Astrocyte of the cerebellum (primary cell): ENCODE measurements at regions of chr6 and their contacts with region 1.

Region 1: GRCh38 chr6:134918418-134918961 is 31.4 kb downstream of the ALDH8A1 start:
- DNase-seq: no peak
- H3K4me3 ChIP-seq: no peak overlapping the region
- CTCF ChIP-seq: no peak

Region 2: DNA sequence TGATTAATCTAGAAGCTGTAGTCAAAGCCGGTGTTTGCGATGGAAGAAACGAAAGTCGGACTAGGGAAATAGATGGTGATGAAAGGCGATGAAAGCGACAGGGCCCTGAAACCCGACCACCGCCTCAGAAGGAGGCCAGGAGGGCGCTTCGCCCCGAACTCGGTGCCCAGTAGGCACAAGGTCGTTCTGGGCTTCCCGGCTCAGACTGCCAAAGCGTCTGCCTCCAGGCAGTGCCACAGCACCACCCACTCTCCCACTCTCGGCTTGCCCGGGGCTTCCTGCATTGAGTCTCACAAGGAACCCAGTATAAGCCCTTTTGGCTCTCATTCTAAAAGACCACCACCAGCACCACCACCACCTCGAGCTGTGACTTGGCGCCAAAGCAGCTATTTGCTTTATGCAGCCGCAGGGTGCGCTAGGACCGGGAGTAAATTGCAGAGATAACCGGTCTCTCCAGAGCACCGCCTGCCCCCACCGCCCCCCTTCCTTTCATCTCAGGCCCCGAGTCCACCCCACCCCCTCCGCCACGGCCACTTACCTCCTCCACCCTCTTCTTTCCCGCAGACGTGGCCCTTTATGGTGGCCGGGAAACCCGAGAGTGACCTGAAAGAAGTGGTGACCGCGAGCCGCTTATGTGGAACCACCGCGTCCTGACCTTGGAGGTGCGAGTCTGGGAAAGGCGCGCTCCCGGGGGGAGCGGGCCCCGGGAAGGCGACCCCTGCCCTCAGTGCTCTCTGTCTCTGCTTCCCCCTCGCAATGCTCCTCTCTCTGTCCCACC is 1027.2 kb before region 1 on chr6:
- in situ Hi-C with region 1: no loop called
- DNase-seq: no peak
- H3K4me3 ChIP-seq: peak overlapping the region; percentile 35
- CTCF ChIP-seq: no peak

Region 3: GRCh38 chr6:134822920-134823709 is 95.4 kb before region 1 on chr6:
- in situ Hi-C with region 1: no loop called
- DNase-seq: peak; percentile 88
- H3K4me3 ChIP-seq: no peak overlapping the region
- CTCF ChIP-seq: peak; percentile 88

Region 4: DNA sequence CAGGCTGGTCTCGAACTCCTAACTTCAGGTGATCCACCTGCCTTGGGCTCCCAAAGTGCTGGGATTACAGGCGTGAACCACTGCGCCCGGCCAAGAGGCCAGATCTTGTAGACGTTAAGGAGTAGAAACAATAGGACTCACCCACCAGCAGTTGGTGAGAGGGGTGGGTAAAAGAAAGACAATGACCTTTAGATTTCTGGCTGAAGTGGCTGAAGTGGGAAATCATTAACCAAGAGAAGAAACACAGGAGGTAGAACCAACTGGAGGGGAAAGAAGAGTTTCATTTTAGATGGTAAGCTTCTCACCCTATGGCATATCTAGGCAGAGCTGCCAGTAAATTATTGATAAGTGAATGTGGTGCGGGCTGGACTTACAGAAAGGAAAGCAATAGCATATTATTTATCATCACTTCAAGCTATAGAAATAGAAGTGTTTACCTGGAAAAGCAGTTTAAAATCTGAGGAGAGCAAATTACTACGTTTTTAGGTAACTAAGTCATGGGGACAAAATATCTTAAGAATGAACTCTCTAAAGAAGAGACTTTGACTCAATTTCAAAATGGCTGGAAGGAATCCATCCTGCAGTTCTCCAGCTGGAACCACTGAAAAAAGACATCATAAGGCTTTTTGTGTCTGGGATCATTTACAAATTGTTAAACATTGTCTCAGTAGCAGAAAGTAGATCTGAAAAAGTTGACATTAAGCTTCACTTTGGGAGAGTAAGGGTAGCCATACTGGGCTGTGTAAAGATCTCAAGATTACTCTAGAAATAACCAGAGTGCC is 78.2 kb before region 1 on chr6:
- in situ Hi-C with region 1: loop called (anchors 5 kb)
- DNase-seq: no peak
- H3K4me3 ChIP-seq: no peak overlapping the region
- CTCF ChIP-seq: no peak